Prostate gland (tissue), 2 donors: ENCODE measurements at regions of chr11 and their contacts with region 1.

Region 1: GRCh38 chr11:58579192-58580129 is 598 bp downstream of the ZFP91 start:
- DNase-seq: peak; percentile 88
- H3K4me3 ChIP-seq: peak overlapping the region; percentile 98
- H3K27ac ChIP-seq: peak overlapping the region; percentile 100
- H3K4me1 ChIP-seq: peaks cover 3% of the 10 kb centered on the region
- H3K27me3 ChIP-seq: no peaks in the 10 kb centered on the region
- CTCF ChIP-seq: peak; percentile 81 to 96 (median 92)
- POLR2A ChIP-seq: peak; percentile 34

Region 2: DNA sequence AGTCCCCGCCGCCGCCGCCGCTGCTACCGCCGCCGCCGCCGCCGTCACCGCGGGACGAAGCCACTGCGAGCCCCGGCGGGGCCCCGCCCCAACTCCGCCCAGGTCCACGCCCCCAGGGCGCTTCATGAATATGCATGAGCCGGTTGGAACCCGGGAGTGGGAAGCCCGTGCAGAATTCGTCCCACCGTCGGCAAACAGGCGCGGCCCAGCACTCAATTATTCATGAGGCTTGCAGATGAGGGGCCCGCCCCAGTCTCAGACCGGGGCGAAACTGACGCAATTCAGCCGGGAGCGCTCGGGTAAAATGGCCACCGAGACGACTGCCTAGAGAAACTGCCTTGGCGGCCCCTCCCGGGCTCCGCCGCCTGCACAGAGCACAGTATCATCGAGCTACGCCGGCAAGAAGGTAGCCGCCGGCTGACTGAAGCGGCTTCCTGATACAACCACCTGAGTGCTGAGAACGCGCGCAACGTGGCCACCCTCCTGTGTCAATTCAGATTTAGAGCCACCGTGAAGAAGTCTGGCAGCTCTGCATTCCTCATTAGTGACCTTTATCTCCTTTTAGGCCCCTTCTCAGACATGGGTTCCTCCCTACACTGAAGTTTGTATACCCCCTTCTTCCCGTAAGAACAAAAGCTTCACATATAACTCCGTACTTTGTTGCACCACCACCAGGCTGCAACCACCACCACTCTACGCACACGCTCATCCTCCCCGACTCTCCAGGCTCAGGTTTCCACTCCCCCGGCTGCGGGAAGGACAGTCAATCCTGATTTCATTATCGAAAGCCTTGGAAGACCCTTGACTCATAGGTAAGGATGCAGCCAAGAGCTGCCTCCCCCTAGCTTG is 1254.4 kb before region 1 on chr11 and contains the start of gene TNKS1BP1:
- intact Hi-C with region 1: loop called (anchors 10 kb)
- DNase-seq: peak; percentile 99
- H3K4me3 ChIP-seq: peak within 1 kb of the TSS; percentile 81 to 94
- H3K27ac ChIP-seq: peak within 1 kb of the TSS; percentile 97 to 99
- H3K4me1 ChIP-seq: peaks cover 17% of the 10 kb centered on the region
- H3K27me3 ChIP-seq: no peaks in the 10 kb centered on the region
- CTCF ChIP-seq: peak in 1 of 4 experiments; percentile 12
- POLR2A ChIP-seq: peak; percentile 88
- total RNA-seq, gene TNKS1BP1: 140 to 158 TPM

Region 3: DNA sequence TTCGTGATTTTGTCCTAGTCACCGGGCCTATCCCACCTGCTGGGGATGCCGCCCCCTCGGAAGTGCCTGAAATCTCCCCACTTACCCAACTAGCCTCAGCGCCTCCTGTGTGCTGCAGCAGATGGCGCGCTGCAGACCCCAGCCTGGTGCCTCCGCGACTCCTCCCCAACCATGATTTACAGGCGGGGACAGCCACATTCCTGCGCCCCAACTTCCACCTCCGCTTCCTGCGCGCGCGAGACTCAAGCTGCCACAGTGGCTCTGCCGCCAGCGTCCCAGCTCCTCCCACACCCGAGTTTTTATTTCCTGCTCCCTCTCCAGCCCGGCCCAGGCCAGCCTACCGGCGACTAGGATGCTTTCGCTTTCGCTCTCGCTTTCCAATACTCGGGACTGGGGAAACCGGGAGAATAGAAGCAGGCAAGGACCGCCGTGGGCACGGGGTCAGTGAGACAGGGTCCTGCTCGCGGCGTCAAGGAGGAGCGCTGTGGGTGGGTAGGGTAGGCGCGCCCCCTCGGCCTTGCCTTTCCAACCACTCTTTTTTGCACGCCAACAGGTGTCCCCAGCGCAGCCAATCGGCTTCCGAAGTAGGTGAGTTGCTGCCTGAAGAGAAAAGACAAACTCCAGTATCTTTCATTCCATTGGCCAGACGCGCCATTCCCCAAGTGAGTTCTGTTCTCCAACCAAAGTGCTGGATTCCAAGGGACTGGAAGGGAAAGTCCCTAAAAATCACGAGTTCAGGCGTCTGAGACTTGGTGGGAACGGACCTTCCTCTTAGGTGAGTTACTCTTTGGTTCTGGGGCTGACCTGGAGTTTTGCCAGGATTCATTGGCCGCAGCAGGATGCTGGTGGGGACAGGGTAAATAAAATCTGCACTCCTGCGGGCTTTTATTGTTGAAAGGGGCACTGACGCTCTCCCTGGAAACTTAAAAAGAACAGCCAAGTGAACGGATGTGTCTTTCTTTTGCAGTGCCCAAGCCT is 563.4 kb after region 1 on chr11 and contains the start of gene FAM111A:
- intact Hi-C with region 1: loop called (anchors 5 kb)
- DNase-seq: peak; percentile 90
- H3K4me3 ChIP-seq: peak within 1 kb of the TSS; percentile 64 to 77
- H3K27ac ChIP-seq: peak within 1 kb of the TSS; percentile 90 to 95
- H3K4me1 ChIP-seq: peaks cover 5% of the 10 kb centered on the region
- H3K27me3 ChIP-seq: no peaks in the 10 kb centered on the region
- CTCF ChIP-seq: peak in 2 of 4 experiments; percentile 10 to 13
- POLR2A ChIP-seq: peak; percentile 32
- total RNA-seq, gene FAM111A: 49.5 to 60.3 TPM